MCF 10A (cell line): ENCODE measurements at regions of chr19 and their contacts with region 1.

Region 1: GRCh38 chr19:42378225-42379215 is 11.6 kb downstream of the CNFN start:
- DNase-seq: no peak
- H3K4me3 Mint-ChIP-seq: no peak overlapping the region
- H3K27ac Mint-ChIP-seq: no peak overlapping the region
- H3K4me1 Mint-ChIP-seq: peaks cover 4% of the 10 kb centered on the region
- H3K27me3 Mint-ChIP-seq: no peaks in the 10 kb centered on the region
- CTCF ChIP-seq: no peak

Region 2: DNA sequence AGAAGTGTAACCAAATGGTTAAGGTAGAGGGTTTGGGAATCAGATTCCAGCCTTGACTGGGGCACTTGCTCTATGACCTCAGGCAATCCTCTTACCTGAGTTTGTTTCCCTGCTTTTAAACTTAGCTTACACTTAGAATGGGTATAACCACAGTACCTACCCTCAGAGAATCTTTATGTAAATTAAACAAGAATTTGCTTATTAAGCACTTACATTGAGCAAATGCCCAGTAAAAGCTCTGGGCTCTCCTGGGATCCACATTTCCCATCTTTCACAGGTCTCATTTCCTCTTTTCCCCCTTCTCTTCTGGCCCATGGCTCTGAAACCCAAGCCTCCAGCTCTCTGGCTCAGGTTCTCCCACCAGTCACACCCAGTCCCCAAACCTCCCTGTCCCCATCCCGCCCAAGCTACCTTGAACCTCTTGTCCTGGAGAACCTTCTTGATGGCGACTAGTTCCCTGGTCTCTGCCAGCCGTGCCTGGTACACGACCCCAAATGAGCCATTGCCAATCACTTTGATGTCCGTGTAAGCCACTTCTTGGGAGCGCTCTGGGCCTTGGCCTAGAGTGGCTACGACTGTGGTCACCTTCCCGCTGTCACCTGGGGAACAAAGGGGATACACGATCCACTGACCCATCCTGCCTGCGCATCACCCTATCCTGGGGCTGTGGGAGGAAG is 138.8 kb before region 1 on chr19:
- CTCF ChIA-PET with region 1: no interaction called
- POLR2A ChIA-PET with region 1: no interaction called
- intact Hi-C with region 1: no loop called
- DNase-seq: no peak
- H3K4me3 Mint-ChIP-seq: no peak overlapping the region
- H3K27ac Mint-ChIP-seq: no peak overlapping the region
- H3K4me1 Mint-ChIP-seq: peaks cover 18% of the 10 kb centered on the region
- H3K27me3 Mint-ChIP-seq: no peaks in the 10 kb centered on the region
- CTCF ChIP-seq: no peak

Region 3: GRCh38 chr19:42261763-42262162 is 116.8 kb before region 1 on chr19:
- CTCF ChIA-PET with region 1: no interaction called
- POLR2A ChIA-PET with region 1: no interaction called
- intact Hi-C with region 1: no loop called
- DNase-seq: no peak
- H3K4me3 Mint-ChIP-seq: no peak overlapping the region
- H3K27ac Mint-ChIP-seq: no peak overlapping the region
- H3K4me1 Mint-ChIP-seq: no peaks in the 10 kb centered on the region
- H3K27me3 Mint-ChIP-seq: no peaks in the 10 kb centered on the region
- CTCF ChIP-seq: no peak

Region 4: DNA sequence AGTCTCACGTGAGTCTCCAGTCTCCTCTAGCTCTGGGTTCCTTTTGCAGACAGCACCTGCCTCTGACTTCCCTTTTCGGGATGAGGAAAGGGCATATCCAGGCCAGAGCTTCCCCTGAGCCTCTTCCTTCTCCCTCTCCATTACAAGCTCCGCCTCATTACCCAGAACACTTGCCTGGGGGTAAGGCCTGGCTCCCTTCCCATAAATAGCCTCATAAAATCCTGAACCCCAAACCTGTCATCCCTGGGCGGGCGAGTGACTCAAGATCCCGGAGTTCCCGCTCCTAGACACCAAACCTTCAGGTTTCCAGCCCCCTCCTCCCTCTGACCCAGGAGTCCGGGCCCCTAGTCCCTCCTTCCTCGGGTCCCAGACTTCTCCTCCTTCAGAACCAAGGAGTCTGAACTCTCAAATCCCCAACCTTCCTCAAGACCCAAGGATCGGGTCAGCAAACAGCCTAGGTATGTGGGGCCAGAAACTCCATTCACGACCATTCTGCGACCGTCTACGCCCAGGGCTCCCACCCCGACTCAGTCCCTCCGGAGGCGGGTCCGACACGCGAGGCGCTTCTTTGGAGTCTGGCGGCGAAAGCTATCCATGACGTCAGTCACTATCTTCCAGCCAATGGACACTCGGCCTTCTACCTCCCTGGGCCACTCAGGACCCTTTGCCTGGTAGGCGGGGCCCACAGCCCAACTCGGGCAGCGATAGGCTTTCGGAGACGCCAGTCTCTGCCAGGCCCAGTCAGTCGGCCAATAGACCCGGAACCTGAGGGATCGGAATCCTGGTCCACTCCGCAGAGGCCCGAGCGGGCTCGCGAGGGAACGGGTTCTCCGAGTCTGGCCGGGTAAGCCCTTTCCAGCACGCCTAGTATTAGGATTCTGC is 18.1 kb after region 1 on chr19:
- CTCF ChIA-PET with region 1: interaction called, 13 read pairs
- POLR2A ChIA-PET with region 1: interaction called, 12 read pairs
- intact Hi-C with region 1: no loop called
- DNase-seq: peak; percentile 99
- H3K4me3 Mint-ChIP-seq: peak overlapping the region; percentile 83
- H3K27ac Mint-ChIP-seq: peak overlapping the region; percentile 99
- H3K4me1 Mint-ChIP-seq: peaks cover 47% of the 10 kb centered on the region
- H3K27me3 Mint-ChIP-seq: peaks cover 9% of the 10 kb centered on the region
- CTCF ChIP-seq: no peak

Region 5: DNA sequence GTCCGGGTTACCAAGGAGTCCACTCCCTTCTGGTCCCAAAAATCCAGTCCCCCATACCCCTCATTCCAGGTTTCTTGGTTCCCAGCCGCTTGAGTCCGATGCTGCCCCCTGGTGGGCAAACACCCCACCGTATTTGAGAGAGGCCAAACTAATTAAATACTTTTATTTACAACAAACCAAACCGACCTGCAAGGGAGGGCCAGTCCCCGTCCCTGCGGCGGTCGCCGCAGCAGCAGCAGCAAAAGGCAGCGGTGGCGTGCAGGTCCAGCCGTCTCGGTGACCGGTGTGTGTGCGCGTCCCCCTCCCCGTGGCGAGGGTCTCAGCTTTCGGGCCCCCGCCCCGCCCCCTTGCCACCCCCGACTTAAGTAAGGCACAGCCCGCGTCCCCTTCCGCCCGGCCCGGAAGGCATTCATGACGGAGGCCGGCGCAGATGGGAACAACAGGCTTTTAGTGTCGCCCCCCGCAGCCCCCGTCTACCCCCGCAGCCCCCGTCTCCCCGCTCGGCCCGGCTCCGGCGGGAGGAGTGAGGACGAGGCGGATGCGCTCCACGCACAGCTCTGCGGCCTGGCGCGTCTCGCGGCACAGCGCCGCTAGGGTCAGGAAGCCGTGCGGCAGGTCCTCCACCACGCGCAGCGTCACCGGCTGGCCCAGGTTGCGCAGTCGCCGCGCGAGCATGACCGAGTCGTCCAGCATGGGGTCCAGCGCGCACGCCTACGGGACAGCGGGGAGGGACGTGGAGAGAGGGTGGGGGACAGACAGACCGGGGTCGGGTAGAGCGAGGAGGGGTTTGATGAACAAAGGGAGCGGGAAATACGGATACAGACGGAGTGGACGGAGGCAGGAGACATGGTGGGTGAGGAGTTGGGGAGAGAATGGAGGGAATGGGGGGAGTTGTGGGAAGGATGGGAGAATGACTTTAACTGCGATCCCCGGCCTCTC is 23.1 kb after region 1 on chr19:
- CTCF ChIA-PET with region 1: interaction called, 13 read pairs
- POLR2A ChIA-PET with region 1: interaction called, 12 read pairs
- intact Hi-C with region 1: no loop called
- DNase-seq: peak; percentile 66
- H3K4me3 Mint-ChIP-seq: peak overlapping the region; percentile 47
- H3K27ac Mint-ChIP-seq: no peak overlapping the region
- H3K4me1 Mint-ChIP-seq: peaks cover 31% of the 10 kb centered on the region
- H3K27me3 Mint-ChIP-seq: no peaks in the 10 kb centered on the region
- CTCF ChIP-seq: peak; percentile 83